ENCODE measurements at regions of chr7 and their contacts with region 1.

Region 1: DNA sequence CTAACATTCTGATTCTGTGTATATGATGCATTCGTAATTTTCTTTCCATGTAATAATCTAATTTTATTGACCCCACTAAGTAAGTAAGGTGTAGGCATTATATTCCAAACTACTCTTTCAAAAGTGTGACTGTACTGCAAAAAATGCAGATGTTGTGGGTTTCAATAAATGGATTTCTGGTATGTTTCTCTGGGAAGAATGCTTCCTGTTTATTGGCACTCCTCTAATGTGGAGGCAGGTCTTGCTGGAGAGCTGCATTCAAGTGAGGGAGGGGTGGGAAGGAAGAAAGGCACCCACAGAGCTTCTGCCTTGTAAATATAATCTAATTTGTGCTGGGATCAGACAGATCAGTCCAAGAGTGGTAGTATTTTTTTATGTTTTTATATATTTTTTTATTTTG is 23.9 kb downstream of the ST7 start:
- DNase-seq: no peak
- ATAC-seq: no peak
- H3K4me3 ChIP-seq: no peak overlapping the region
- H3K27ac ChIP-seq: no peak overlapping the region
- H3K4me1 ChIP-seq: no peaks in the 10 kb centered on the region
- H3K27me3 ChIP-seq: no peaks in the 10 kb centered on the region
- CTCF ChIP-seq: no peak

Region 2: DNA sequence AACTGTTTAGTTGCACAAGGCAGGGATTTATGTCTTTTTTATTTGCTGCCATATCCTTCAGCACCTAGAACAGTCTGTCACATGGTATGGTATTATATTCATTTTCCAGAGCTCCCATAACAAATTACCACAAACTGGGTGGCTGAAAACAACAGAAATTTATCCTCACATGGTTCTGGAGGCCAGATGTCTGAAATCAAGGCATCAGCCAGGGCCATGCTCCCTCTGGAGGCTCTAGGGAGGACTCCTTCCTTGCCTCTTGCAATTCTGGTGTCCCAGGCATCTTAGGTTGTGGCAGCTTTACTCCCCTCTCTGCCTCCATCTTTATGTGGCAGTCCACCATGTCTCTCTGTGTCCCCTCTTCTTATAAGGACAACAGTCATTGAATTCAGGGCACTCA is 262.1 kb before region 1 on chr7:
- intact Hi-C with region 1: no loop called
- DNase-seq: no peak
- ATAC-seq: no peak
- H3K4me3 ChIP-seq: no peak overlapping the region
- H3K27ac ChIP-seq: no peak overlapping the region
- H3K4me1 ChIP-seq: peaks cover 16% of the 10 kb centered on the region
- H3K27me3 ChIP-seq: no peaks in the 10 kb centered on the region
- CTCF ChIP-seq: no peak

Region 3: GRCh38 chr7:117014673-117015133 is 37.5 kb after region 1 on chr7:
- intact Hi-C with region 1: loop called in 1 of 2 experiments (anchors 5 kb)
- DNase-seq: peak; percentile 17 to 59
- ATAC-seq: peak; percentile 64 to 85 (median 72)
- H3K4me3 ChIP-seq: peak overlapping the region; percentile 61
- H3K27ac ChIP-seq: peak overlapping the region; percentile 72
- H3K4me1 ChIP-seq: peaks cover 53% of the 10 kb centered on the region
- H3K27me3 ChIP-seq: no peaks in the 10 kb centered on the region
- CTCF ChIP-seq: no peak